Panc1 (cell line): ENCODE measurements at regions of chr14 and their contacts with region 1.

Region 1: DNA sequence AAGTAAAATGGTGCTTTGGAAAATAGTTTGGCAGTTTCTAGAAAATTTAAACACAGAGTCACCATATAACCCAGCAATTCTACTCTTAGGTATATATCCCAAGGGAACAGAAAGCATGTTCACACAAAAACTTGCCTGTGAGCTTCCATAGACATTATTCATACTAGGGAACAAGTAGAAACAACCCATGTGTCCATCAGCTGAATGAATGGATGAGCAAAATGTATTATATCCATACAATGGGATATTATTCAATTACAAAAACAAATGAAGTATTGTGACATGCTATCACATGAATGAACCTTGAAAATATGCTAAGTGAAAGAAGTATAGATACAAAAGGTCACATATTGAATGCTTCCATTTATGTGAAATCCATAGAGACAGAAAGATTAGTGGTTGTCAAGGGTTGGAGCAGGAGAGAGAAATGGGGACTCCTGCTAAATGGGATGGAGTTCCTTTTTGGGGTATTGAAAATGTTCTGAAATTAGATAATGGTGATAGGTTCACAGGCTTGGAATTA is 7.9 kb downstream of the SLC10A1 start:
- DNase-seq: no peak
- ATAC-seq: no peak
- H3K4me3 ChIP-seq: no peak overlapping the region
- H3K27ac ChIP-seq: no peak overlapping the region
- H3K4me1 ChIP-seq: no peaks in the 10 kb centered on the region
- H3K27me3 ChIP-seq: no peaks in the 10 kb centered on the region
- CTCF ChIP-seq: no peak

Region 2: DNA sequence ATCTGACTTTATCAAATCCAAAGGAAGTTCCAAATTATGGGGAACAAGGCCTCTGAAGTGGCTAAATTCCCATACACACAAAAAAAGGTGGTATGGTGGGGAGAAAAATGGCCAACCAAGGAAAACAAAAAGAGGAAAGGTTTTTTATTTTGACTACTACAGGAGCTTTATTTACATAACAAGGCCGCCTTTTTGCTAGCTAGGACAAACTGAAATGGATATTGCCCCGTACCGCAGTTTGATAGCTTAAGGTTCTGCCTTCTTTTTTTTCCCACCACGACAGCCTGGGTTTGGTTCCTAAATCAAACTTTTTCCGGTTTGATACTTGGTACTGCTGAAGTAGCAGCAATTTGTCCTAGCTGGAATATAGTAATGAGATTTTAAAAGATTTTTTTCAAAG is 503.5 kb after region 1 on chr14:
- CTCF ChIA-PET with region 1: no interaction called
- POLR2A ChIA-PET with region 1: interaction called, 14 read pairs
- in situ Hi-C with region 1: no loop called
- intact Hi-C with region 1: no loop called
- DNase-seq: no peak
- ATAC-seq: no peak
- H3K4me3 ChIP-seq: no peak overlapping the region
- H3K27ac ChIP-seq: no peak overlapping the region
- H3K4me1 ChIP-seq: no peaks in the 10 kb centered on the region
- H3K27me3 ChIP-seq: no peaks in the 10 kb centered on the region
- CTCF ChIP-seq: no peak